GM12878 (cell line): ENCODE measurements at regions of chr9 and their contacts with region 1.

Region 1: DNA sequence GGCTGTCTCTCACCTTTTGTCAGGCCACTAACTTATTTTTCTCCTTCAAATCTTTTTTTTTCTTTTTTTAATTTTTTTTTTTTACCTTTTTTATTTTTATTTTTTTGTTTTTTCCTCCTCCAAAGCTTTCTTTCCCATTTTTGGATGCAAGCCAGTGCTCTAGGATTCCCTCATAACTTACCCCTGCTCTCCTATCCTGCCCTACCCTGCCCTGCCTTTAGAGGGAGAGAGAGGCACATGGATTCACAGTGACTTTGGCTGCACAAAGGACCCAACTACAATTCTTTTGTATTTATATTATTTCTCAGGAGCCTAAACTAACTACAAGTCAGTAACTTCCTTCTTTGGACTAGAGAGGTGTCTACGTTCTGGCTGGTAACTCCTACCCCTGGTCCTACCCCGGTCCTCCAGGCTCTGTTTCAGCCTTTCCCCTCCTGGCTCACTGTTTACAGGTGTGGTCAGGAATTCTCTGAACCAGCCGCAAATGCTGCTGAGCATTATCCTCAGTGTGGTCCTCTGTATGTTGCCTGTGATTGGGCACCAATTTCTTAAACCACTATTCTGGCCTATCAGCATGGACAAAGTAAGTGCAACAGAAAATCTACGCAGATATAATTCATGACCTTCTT is 8.4 kb upstream of the RUSC2 start:
- DNase-seq: no peak
- ATAC-seq: peak; percentile 75
- H3K4me3 ChIP-seq: no peak overlapping the region
- H3K27ac ChIP-seq: no peak overlapping the region
- H3K4me1 ChIP-seq: no peaks in the 10 kb centered on the region
- H3K27me3 ChIP-seq: no peaks in the 10 kb centered on the region
- CTCF ChIP-seq: peak; percentile 57 to 69 (median 64); a peak in 5 of 6 replicates
- EP300 ChIP-seq: no peak
- POLR2A ChIP-seq: no peak
- RAD21 ChIP-seq: peak; percentile 72

Region 2: GRCh38 chr9:35258676-35259474 is 222.6 kb before region 1 on chr9:
- CTCF ChIA-PET with region 1: no interaction called
- POLR2A ChIA-PET with region 1: no interaction called
- RAD21 ChIA-PET with region 1: interaction called, 3 read pairs
- SMC1A ChIA-PET with region 1: no interaction called
- in situ Hi-C with region 1: no loop called
- intact Hi-C with region 1: loop called (anchors 2 kb)
- DNase-seq: no peak
- ATAC-seq: peak; percentile 71
- H3K4me3 ChIP-seq: no peak overlapping the region
- H3K27ac ChIP-seq: no peak overlapping the region
- H3K4me1 ChIP-seq: no peaks in the 10 kb centered on the region
- H3K27me3 ChIP-seq: no peaks in the 10 kb centered on the region
- CTCF ChIP-seq: peak; percentile 60 to 63 (median 63)
- EP300 ChIP-seq: no peak
- POLR2A ChIP-seq: no peak
- RAD21 ChIP-seq: peak; percentile 67